Ovary (tissue), 10 donors: ENCODE measurements at regions of chr2 and their contacts with region 1.

Region 1: GRCh38 chr2:71299507-71299906 is 32.1 kb upstream of the ZNF638 start:
- DNase-seq: no peak
- H3K4me3 ChIP-seq: no peak overlapping the region
- H3K27ac ChIP-seq: no peak overlapping the region
- H3K4me1 ChIP-seq: no peaks in the 10 kb centered on the region
- H3K27me3 ChIP-seq: no peaks in the 10 kb centered on the region
- CTCF ChIP-seq: peak; percentile 19 to 33 (median 27)
- EP300 ChIP-seq: no peak
- POLR2A ChIP-seq: no peak

Region 2: DNA sequence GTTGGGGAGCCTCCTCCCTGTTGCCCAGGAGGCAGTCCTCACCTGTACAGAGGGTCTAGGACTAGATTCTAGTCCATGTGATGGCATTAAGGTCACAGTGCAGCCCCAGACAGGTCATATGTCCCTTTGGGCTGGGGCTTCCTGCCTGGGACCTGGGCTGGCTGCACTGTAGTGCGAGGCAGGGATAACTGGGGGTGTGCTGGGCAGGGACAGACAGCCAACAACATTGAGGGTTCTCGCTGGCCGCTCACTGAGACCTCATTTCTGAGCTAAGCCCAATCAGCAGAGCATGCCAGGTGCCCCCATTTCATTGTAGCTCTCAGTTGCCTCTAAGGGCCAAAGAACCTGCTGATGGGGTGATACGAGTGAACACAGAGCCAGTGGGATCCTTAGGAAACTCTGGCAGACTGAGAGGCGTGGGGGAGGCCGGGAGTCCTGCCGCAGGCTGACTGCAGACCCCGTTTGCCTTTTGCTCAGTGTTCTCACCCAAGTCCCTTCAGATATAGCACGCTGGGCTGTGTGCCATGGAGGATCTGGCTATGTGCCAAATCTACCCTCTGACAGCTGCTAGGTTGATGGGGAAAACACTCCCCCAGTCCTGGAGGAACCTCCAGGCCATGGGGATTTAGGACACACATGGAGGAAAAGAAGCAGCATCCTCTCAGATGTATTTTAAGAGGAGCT is 205.7 kb after region 1 on chr2:
- intact Hi-C with region 1: loop called (anchors 5 to 10 kb)
- DNase-seq: peak in 2 of 5 donors; percentile 39 to 43
- H3K4me3 ChIP-seq: no peak overlapping the region
- H3K27ac ChIP-seq: no peak overlapping the region
- H3K4me1 ChIP-seq: no peaks in the 10 kb centered on the region
- H3K27me3 ChIP-seq: no peaks in the 10 kb centered on the region
- CTCF ChIP-seq: no peak
- EP300 ChIP-seq: no peak
- POLR2A ChIP-seq: no peak

Region 3: GRCh38 chr2:71510196-71510807 is 210.8 kb after region 1 on chr2:
- intact Hi-C with region 1: loop called (anchors 5 to 10 kb)
- DNase-seq: peak; percentile 44 to 72 (median 65)
- H3K4me3 ChIP-seq: no peak overlapping the region
- H3K27ac ChIP-seq: no peak overlapping the region
- H3K4me1 ChIP-seq: no peaks in the 10 kb centered on the region
- H3K27me3 ChIP-seq: no peaks in the 10 kb centered on the region
- CTCF ChIP-seq: peak; percentile 62 to 68 (median 67)
- EP300 ChIP-seq: no peak
- POLR2A ChIP-seq: no peak